ENCODE measurements at regions of chr20 and their contacts with region 1.

Region 1: GRCh38 chr20:13546497-13547131 is 92.1 kb downstream of the TASP1 start:
- DNase-seq: peak; percentile 86
- H3K4me3 Mint-ChIP-seq: no peak overlapping the region
- H3K27ac Mint-ChIP-seq: peak overlapping the region; percentile 4
- H3K4me1 Mint-ChIP-seq: peaks cover 3% of the 10 kb centered on the region
- H3K27me3 Mint-ChIP-seq: no peaks in the 10 kb centered on the region
- CTCF ChIP-seq: peak; percentile 67

Region 2: DNA sequence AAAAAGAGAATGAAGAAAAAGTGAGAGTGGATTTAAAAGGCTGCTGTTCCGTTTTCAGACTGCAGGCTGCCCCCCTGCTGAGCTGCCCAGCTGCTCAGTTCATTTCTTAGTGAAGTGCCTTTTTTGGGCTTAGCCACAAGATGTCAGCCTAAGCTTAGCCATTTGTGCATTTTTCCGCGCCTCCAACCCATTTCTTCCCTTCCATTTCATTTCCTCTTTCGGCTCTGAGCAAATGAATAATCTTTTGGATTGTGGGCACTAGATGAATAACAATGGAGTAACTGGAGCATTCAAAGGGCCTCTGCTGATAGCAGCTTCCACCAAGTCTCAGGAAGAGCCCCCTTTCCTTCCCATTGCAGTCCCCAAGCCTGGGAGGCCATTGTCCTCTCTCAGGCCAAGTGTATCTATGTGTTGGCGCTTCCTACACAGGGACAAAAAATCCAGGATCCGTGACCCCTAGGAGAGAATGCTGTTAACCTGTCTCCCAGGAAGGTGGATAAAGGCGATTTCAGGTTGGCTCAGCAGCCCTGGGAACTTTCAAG is 621.3 kb before region 1 on chr20:
- CTCF ChIA-PET with region 1: interaction called, 12 read pairs
- POLR2A ChIA-PET with region 1: no interaction called
- intact Hi-C with region 1: loop called (anchors 2 kb)
- DNase-seq: peak; percentile 78
- H3K4me3 Mint-ChIP-seq: no peak overlapping the region
- H3K27ac Mint-ChIP-seq: no peak overlapping the region
- H3K4me1 Mint-ChIP-seq: peaks cover 24% of the 10 kb centered on the region
- H3K27me3 Mint-ChIP-seq: no peaks in the 10 kb centered on the region
- CTCF ChIP-seq: peak; percentile 94

Region 3: GRCh38 chr20:13119583-13119982 is 427.0 kb before region 1 on chr20:
- CTCF ChIA-PET with region 1: interaction called, 255 read pairs
- POLR2A ChIA-PET with region 1: interaction called, 4 read pairs
- intact Hi-C with region 1: loop called (anchors 1 kb)
- DNase-seq: peak; percentile 77
- H3K4me3 Mint-ChIP-seq: no peak overlapping the region
- H3K27ac Mint-ChIP-seq: no peak overlapping the region
- H3K4me1 Mint-ChIP-seq: peaks cover 6% of the 10 kb centered on the region
- H3K27me3 Mint-ChIP-seq: no peaks in the 10 kb centered on the region
- CTCF ChIP-seq: peak; percentile 69

Region 4: DNA sequence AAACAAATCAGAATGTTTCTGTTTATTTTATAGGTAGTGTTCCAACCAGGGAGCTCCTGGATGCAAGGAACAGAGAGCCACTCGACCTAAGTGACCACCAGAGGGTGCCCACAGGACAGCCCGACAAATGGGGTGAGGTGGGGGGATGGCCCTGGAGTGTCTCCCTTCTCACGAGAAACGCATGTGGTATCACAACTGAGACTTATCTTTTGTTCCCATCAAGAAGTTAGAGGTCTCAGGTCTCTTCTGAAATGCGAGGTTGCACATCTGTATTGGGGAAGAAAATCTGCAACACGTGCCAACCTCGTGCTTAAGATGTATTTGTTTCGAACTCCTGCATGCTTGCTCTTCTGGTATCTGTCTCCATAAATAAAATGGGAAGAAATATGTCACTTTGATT is 221.6 kb before region 1 on chr20:
- CTCF ChIA-PET with region 1: interaction called, 58 read pairs
- POLR2A ChIA-PET with region 1: interaction called, 4 read pairs
- intact Hi-C with region 1: loop called (anchors 1 kb)
- DNase-seq: peak; percentile 51
- H3K4me3 Mint-ChIP-seq: no peak overlapping the region
- H3K27ac Mint-ChIP-seq: no peak overlapping the region
- H3K4me1 Mint-ChIP-seq: no peaks in the 10 kb centered on the region
- H3K27me3 Mint-ChIP-seq: no peaks in the 10 kb centered on the region
- CTCF ChIP-seq: peak; percentile 38

Region 5: GRCh38 chr20:13401596-13401995 is 145.0 kb before region 1 on chr20:
- CTCF ChIA-PET with region 1: interaction called, 11 read pairs
- POLR2A ChIA-PET with region 1: no interaction called
- intact Hi-C with region 1: no loop called
- DNase-seq: no peak
- H3K4me3 Mint-ChIP-seq: no peak overlapping the region
- H3K27ac Mint-ChIP-seq: no peak overlapping the region
- H3K4me1 Mint-ChIP-seq: no peaks in the 10 kb centered on the region
- H3K27me3 Mint-ChIP-seq: no peaks in the 10 kb centered on the region
- CTCF ChIP-seq: no peak

Region 6: GRCh38 chr20:13458860-13459451 is 87.7 kb before region 1 on chr20:
- CTCF ChIA-PET with region 1: interaction called, 56 read pairs
- POLR2A ChIA-PET with region 1: interaction called, 5 read pairs
- intact Hi-C with region 1: loop called (anchors 1 kb)
- DNase-seq: peak; percentile 56
- H3K4me3 Mint-ChIP-seq: no peak overlapping the region
- H3K27ac Mint-ChIP-seq: no peak overlapping the region
- H3K4me1 Mint-ChIP-seq: peaks cover 8% of the 10 kb centered on the region
- H3K27me3 Mint-ChIP-seq: no peaks in the 10 kb centered on the region
- CTCF ChIP-seq: peak; percentile 81

Region 7: GRCh38 chr20:13533946-13534345 is 12.7 kb before region 1 on chr20:
- CTCF ChIA-PET with region 1: interaction called, 88 read pairs
- POLR2A ChIA-PET with region 1: interaction called, 3 read pairs
- intact Hi-C with region 1: no loop called
- DNase-seq: no peak
- H3K4me3 Mint-ChIP-seq: no peak overlapping the region
- H3K27ac Mint-ChIP-seq: no peak overlapping the region
- H3K4me1 Mint-ChIP-seq: peaks cover 4% of the 10 kb centered on the region
- H3K27me3 Mint-ChIP-seq: no peaks in the 10 kb centered on the region
- CTCF ChIP-seq: no peak